Tibial artery (tissue), 4 donors: ENCODE measurements at regions of chr12 and their contacts with region 1.

Region 1: GRCh38 chr12:116533343-116534251 is 25.6 kb upstream of the MAP1LC3B2 start:
- DNase-seq: peak; percentile 63 to 81
- H3K4me3 ChIP-seq: peak overlapping the region; percentile 55 to 57
- H3K27ac ChIP-seq: peak overlapping the region; percentile 62 to 63
- H3K4me1 ChIP-seq: peaks cover 6 to 40% (median 31%) of the 10 kb centered on the region in 4 donors
- H3K27me3 ChIP-seq: no peaks in the 10 kb centered on the region
- CTCF ChIP-seq: no peak

Region 2: GRCh38 chr12:116434155-116435011 is 99.2 kb before region 1 on chr12:
- intact Hi-C with region 1: loop called (anchors 5 kb)
- DNase-seq: peak; percentile 92 to 97
- H3K4me3 ChIP-seq: peak overlapping the region; percentile 26 to 48
- H3K27ac ChIP-seq: peak overlapping the region; percentile 66 to 69
- H3K4me1 ChIP-seq: peaks cover 0 to 40% (median 26%) of the 10 kb centered on the region in 4 donors
- H3K27me3 ChIP-seq: no peaks in the 10 kb centered on the region
- CTCF ChIP-seq: peak in 1 of 2 experiments; percentile 12